Cardiac septum (tissue), 1 donor: ENCODE measurements at regions of chr5 and their contacts with region 1.

Region 1: DNA sequence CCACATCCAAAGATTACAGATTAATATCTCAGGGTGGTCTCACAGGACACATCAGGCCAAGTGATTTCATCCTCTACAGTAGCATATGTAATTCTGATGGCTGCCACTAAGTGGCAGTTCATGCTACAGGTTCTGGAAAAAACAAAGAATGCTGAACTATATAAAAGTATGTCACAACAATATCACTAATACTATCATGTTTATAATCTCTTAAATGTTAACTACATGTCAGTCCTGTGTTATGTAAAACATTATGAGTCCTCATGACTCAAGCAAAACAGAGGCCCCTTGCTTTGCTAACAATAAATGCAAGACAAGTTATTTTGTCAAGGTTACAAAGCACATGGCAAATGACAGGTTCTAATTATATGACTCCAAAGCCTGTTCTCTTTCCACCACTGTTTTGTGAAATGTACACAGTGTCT is 233.2 kb downstream of the FBXL17 start:
- DNase-seq: no peak

Region 2: DNA sequence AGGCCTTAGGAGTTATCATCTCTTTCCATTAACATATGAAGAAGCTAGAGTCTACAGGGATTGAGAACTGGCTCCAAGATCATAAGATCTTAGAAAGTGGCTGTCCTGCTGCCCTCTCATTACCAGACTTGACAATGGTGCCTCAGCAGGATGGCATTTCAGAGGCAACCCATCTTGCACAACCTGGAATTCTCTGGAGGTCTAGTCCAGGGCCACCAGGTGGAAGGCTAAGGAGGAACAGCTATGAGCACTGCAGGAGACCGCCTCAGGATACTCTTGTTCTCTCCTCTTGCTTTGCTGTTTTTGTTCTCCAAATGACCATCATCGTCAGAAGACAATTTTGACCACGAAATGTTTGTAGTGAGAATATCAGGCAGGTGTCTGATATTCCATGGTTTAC is 89.4 kb before region 1 on chr5:
- intact Hi-C with region 1: no loop called
- DNase-seq: no peak

Region 3: DNA sequence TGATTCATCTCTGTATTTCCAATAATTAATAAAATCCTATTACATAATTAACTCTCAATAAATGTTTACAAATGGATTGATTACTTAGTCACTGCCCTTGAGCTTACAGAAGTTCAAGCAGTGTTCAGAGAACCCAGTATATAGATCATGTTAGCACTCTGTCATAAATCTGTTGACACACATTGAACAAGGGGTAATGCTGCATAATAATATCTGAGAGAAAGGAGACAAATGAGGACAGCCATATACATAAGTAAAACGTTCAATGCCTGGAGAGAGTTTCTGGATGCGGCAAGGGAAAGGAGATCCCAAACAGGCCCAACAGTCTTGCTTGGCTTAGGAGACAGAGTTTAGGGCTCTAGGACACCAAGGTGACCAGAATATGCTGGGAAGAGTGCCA is 37.0 kb before region 1 on chr5:
- intact Hi-C with region 1: no loop called
- DNase-seq: no peak

Region 4: GRCh38 chr5:108181975-108182374 is 33.2 kb after region 1 on chr5:
- intact Hi-C with region 1: no loop called
- DNase-seq: no peak

Region 5: GRCh38 chr5:108260117-108260857 is 111.6 kb after region 1 on chr5:
- intact Hi-C with region 1: loop called (anchors 10 kb)
- DNase-seq: no peak

Region 6: GRCh38 chr5:108345541-108346171 is 196.9 kb after region 1 on chr5:
- intact Hi-C with region 1: loop called (anchors 10 kb)
- DNase-seq: no peak

Region 7: DNA sequence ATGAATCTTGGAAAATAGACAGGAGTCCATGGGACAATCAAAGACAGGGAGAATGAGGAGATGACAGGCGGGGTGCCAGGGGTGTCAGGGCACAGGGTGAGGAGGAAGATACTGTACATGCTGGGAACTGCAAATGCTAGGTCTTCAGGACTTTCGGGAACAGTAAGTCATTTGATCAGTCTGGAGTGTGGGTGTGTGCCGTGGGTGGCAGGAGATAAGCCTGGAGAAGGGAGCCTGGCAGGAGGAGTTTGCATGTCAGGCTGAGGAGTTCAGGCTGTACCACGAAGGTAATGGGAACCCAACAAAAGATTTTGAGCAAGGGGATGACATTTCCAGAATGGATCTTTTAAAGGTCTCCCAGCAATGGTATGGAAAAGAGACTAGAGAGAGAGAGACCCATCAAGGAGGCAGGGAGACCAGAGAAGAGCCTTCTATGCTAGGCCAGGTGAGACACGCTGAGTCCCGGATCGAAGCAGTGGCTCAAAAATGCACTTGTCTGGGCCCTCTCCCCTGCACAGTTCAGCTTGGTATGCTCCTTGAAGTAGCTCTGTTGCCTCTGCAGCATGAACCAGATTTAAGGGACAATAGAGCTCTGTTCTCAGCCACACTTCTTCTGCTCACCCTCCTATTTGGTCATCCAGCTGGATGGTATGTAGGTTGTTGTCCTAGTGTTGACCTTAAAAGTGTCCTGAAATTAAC is 522.0 kb after region 1 on chr5:
- intact Hi-C with region 1: no loop called
- DNase-seq: no peak